ENCODE measurements at regions of chr6 and their contacts with region 1.

Region 1: DNA sequence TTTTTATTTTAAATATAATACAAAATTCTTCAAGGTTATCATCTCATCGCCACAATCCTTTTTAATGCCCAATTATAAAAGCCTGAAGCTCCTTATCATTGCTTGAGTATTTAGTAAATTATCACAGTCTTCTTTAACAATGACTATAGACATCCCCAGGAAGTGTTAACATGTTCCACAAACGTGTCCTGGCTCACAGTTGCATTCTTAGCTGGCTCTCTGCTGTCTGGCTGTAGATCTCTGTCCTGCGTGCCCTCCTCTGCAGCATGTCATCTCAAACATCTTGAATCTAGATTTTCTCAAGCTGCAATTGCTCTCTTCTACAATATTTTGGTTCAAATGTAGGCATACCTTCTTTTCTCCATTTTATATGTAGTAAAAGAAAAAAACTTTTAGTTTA is 885.2 kb downstream of the EPHA7 start:
- DNase-seq: no peak
- H3K4me3 ChIP-seq: no peak overlapping the region
- H3K27ac ChIP-seq: no peak overlapping the region
- H3K4me1 ChIP-seq: no peaks in the 10 kb centered on the region
- H3K27me3 ChIP-seq: no peaks in the 10 kb centered on the region
- CTCF ChIP-seq: no peak

Region 2: GRCh38 chr6:91613481-91613880 is 920.6 kb before region 1 on chr6:
- CTCF ChIA-PET with region 1: interaction called, 13 read pairs
- POLR2A ChIA-PET with region 1: no interaction called
- intact Hi-C with region 1: no loop called
- DNase-seq: no peak
- H3K4me3 ChIP-seq: no peak overlapping the region
- H3K27ac ChIP-seq: no peak overlapping the region
- H3K4me1 ChIP-seq: no peaks in the 10 kb centered on the region
- H3K27me3 ChIP-seq: no peaks in the 10 kb centered on the region
- CTCF ChIP-seq: no peak

Region 3: GRCh38 chr6:92617721-92618120 is 83.6 kb after region 1 on chr6:
- CTCF ChIA-PET with region 1: no interaction called
- POLR2A ChIA-PET with region 1: no interaction called
- intact Hi-C with region 1: no loop called
- DNase-seq: no peak
- H3K4me3 ChIP-seq: no peak overlapping the region
- H3K27ac ChIP-seq: no peak overlapping the region
- H3K4me1 ChIP-seq: no peaks in the 10 kb centered on the region
- H3K27me3 ChIP-seq: no peaks in the 10 kb centered on the region
- CTCF ChIP-seq: no peak